Activated T-helper 2 cell treated with anti-CD3 and anti-CD28 coated beads, Interferon-gamma antibody, Interleukin-2, Interleukin-4, amounts not matched to agents 10 μg/mL and 5 μg/mL and 100 μg/mL, durations not matched to agents 14 hours and 24 hours and 36 hours (primary cell): ENCODE measurements at regions of chr6 and their contacts with region 1.

Region 1: DNA sequence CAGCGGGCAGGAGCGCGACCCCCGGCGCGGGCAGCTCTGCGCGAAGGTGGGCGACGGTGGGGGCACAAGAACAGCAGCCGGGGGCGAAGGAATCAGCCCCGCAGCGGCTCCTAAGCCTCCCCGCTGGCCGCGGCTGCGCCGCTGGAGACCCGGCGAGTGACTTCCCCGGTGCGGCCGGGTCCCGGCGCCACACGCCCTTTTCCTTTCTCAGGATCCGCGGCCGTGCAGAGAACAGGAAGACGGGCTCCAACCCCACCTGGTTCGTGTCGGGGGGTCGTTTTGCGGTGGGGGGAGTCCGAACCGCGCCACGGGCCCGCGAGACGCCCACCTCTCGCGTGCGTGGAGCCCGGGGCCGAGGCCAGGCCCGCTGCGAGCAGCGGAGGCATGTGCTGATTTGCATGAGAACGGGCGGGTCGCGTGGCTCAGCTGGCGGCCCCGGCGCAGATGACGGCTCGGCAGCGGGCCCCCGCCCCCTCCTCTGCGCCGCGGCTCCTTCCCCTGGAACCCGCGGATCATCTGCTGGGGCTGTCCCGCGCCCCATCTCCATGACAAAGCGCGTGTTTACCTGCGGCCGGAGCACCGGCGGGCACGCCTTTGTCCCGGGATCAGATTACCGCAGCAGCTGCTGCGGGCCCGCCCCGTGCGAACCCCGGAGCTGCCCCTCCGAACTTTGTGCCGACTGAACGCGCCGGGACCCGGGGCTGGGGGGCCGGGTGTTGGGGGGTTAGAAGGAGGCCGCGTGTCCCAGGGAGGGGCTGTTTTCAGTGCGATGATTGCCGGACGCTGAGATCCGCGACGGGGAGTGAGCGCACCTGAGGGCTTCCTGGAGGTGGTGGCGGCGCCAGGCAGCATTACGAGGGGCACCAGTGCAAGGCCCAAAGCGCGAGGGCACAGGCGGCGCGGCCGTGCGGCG is 4.9 kb upstream of the DLL1 start:
- DNase-seq: no peak
- H3K4me3 Mint-ChIP-seq: peak overlapping the region; percentile 64
- H3K27ac Mint-ChIP-seq: no peak overlapping the region
- H3K4me1 Mint-ChIP-seq: peaks cover 14% of the 10 kb centered on the region
- H3K27me3 Mint-ChIP-seq: peaks cover 72% of the 10 kb centered on the region

Region 2: GRCh38 chr6:169253337-169254238 is 1042.2 kb before region 1 on chr6 and contains the start of gene THBS2:
- intact Hi-C with region 1: loop called (anchors 5 kb)
- DNase-seq: no peak
- H3K4me3 Mint-ChIP-seq: no peak within 1 kb of the TSS
- H3K27ac Mint-ChIP-seq: no peak within 1 kb of the TSS
- H3K4me1 Mint-ChIP-seq: no peaks in the 10 kb centered on the region
- H3K27me3 Mint-ChIP-seq: peaks cover 51% of the 10 kb centered on the region
- total RNA-seq, gene THBS2: not detected in 2 replicates

Region 3: GRCh38 chr6:169723200-169723909 is 572.4 kb before region 1 on chr6:
- intact Hi-C with region 1: loop called (anchors 10 kb)
- DNase-seq: peak; percentile 59
- H3K4me3 Mint-ChIP-seq: peak overlapping the region; percentile 97
- H3K27ac Mint-ChIP-seq: peak overlapping the region; percentile 97
- H3K4me1 Mint-ChIP-seq: peaks cover 38% of the 10 kb centered on the region
- H3K27me3 Mint-ChIP-seq: peaks cover 2% of the 10 kb centered on the region

Region 4: DNA sequence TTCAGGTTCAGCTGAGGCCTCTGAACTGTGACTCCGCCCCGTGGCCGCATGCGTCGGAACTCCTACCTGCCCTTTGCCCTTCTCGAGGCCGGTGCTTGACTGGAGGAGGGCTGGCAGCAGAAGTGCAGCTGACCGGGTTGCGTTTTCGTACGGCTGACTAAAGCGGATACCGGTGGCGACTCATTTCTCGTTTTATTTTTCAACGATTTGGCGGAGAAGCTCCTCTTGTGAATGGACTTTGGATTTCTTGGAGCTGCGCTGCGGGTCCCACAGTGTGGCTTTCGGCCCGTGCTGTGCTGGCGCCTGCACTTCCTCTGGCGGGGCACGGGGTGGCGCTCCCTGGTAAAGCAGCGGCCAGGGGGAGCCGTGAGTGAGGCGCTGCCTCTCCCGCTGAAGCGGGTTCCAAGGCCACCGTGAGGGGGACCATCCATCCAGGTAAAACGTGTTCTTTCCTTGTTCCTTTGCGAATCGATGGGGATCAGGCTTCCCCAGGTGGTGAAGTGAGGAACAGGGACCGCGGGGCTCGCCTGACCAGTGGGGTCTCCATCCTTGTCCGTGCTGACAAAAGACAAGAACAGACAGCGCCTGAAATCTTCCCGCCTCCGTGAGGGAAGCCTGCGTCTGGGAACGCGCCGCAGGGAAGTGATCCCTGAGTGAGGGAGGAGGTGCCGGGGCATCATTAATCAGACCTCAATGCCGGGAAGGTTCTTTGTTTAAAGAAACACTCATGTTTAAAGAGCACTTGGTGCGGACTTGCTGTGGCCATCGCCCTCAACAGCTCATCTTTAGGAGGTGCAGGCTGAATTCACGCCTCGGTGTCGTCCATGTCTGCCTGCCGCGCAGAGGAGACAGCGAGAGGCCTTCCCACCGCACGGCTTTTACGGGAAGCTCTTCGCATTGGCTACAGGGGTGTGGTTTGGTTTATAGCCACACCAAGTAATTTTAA is 505.5 kb before region 1 on chr6:
- intact Hi-C with region 1: loop called (anchors 2 kb)
- DNase-seq: peak; percentile 62
- H3K4me3 Mint-ChIP-seq: peak overlapping the region; percentile 78
- H3K27ac Mint-ChIP-seq: peak overlapping the region; percentile 14
- H3K4me1 Mint-ChIP-seq: peaks cover 14% of the 10 kb centered on the region
- H3K27me3 Mint-ChIP-seq: peaks cover 16% of the 10 kb centered on the region

Region 5: GRCh38 chr6:169831450-169832246 is 464.1 kb before region 1 on chr6:
- intact Hi-C with region 1: loop called (anchors 2 kb)
- DNase-seq: peak; percentile 48
- H3K4me3 Mint-ChIP-seq: no peak overlapping the region
- H3K27ac Mint-ChIP-seq: no peak overlapping the region
- H3K4me1 Mint-ChIP-seq: peaks cover 2% of the 10 kb centered on the region
- H3K27me3 Mint-ChIP-seq: peaks cover 38% of the 10 kb centered on the region

Region 6: GRCh38 chr6:169950558-169950957 is 345.2 kb before region 1 on chr6:
- intact Hi-C with region 1: loop called (anchors 5 kb)
- DNase-seq: no peak
- H3K4me3 Mint-ChIP-seq: no peak overlapping the region
- H3K27ac Mint-ChIP-seq: no peak overlapping the region
- H3K4me1 Mint-ChIP-seq: peaks cover 13% of the 10 kb centered on the region
- H3K27me3 Mint-ChIP-seq: peaks cover 18% of the 10 kb centered on the region

Region 7: GRCh38 chr6:170087941-170088581 is 207.7 kb before region 1 on chr6:
- intact Hi-C with region 1: loop called (anchors 5 kb)
- DNase-seq: peak; percentile 66
- H3K4me3 Mint-ChIP-seq: peak overlapping the region; percentile 83
- H3K27ac Mint-ChIP-seq: peak overlapping the region; percentile 93
- H3K4me1 Mint-ChIP-seq: peaks cover 27% of the 10 kb centered on the region
- H3K27me3 Mint-ChIP-seq: no peaks in the 10 kb centered on the region